ENCODE measurements at regions of chr1 and their contacts with region 1.

Region 1: DNA sequence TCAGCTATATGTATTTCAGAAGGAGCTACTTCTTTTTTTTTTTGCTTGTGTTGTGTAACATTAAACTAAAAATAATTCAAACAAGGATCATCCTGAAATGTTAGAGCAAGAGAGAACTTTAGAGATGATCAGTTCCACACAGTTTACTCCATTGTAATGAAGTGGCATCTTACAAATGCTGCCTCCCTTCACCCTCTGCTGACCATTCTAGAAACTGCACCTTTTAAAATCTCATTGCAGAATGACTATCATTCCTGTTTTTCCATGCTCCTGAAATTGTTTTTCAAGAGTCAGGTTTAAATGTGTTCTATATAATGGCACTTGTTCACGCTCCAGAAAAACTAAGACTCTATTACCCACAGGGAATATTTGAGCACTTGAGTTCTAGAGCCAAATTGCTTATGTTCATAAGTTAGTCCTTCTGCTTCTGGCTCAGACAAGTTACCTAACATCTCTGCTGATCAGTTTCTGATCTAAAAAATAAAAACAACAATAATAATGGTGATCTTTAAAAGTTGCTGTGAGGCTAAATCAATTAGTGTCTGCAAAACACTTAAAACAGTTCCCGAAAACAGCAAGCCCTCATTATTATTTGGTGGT is 21.5 kb upstream of the SLC44A5 start:
- DNase-seq: no peak
- ATAC-seq: peak; percentile 80 to 85 (median 82)
- H3K4me3 ChIP-seq: no peak overlapping the region
- H3K27ac ChIP-seq: no peak overlapping the region
- H3K4me1 ChIP-seq: no peaks in the 10 kb centered on the region
- H3K27me3 ChIP-seq: peaks cover 0 to 3% of the 10 kb centered on the region in 2 donors
- CTCF ChIP-seq: peak; percentile 68 to 81 (median 74)
- POLR2A ChIP-seq: no peak

Region 2: DNA sequence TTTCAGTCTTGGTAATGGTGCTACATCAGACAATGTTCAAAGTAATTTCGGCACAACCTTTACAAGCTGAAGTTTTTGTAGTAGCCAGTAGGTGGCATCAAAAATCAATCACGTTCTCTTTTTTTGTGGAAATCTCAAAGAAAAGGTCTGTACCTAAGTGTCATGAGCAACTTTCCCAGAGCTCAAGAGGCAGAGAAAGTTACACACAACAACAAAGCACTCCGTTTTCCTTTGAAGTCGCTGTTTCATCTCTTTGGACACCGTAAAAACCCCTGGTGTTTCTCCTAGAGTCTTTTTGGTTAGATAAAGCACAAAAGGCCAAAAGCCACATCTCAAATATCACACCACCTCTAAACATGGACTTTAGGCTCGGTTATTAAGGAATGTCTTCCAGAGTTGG is 366.7 kb before region 1 on chr1:
- intact Hi-C with region 1: loop called in 1 of 2 experiments (anchors 10 kb)
- DNase-seq: no peak
- ATAC-seq: peak; percentile 64 to 84 (median 81)
- H3K4me3 ChIP-seq: no peak overlapping the region
- H3K27ac ChIP-seq: no peak overlapping the region
- H3K4me1 ChIP-seq: no peaks in the 10 kb centered on the region
- H3K27me3 ChIP-seq: no peaks in the 10 kb centered on the region
- CTCF ChIP-seq: peak; percentile 57 to 64 (median 61)
- POLR2A ChIP-seq: no peak

Region 3: DNA sequence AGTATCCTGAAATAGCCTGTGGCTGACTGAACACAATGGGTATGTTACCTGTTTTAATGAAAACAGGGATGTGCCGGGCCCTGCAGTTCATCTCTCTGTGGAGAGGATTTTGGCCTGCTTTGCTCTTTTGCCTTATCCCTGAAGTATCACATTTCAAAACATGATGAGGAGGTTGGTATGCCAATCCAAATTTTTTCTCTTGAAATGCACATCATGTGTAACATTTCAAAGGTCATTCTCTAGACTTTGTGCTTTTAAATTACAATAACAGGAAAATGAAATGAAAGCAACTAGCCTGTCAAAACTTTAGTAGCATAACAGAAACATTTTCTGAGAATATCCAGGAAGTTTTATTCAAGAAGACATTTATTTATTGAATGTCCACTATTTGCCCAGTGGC is 140.4 kb before region 1 on chr1:
- intact Hi-C with region 1: no loop called
- DNase-seq: no peak
- ATAC-seq: peak in 2 of 4 donors; percentile 78 to 83
- H3K4me3 ChIP-seq: no peak overlapping the region
- H3K27ac ChIP-seq: no peak overlapping the region
- H3K4me1 ChIP-seq: no peaks in the 10 kb centered on the region
- H3K27me3 ChIP-seq: no peaks in the 10 kb centered on the region
- CTCF ChIP-seq: no peak
- POLR2A ChIP-seq: no peak